Natural killer cell (primary cell): ENCODE measurements at regions of chr7 and their contacts with region 1.

Region 1: DNA sequence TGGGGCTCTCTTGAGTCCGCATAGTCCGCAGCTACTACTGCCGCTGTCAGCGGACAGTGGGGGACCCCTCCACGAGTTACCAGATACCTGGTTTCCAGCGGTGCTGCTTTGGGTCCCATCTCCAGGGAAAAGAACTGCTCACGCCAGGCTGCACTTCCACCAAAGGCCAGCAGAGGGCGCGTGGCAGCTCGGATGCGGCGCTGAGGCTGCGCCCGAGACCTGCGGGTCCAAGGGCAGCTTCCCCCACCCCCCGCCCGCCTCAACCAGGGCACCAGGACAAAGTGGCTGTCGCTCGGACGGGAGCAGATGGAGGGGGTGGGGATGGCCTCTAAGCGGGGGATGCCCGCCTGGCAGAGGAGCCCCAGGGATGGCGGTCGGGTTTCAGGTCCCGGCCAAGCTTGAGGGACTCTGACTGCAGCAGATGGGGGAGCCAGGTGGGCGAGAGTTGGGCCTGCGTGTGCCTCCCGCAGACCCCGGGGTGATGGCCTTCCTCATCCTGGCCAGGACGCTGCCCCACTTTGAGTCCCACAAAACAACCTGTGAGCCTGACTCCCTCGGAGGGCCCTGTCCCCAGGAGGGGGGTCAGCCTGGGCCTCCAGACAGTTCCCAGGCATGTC is 23.8 kb upstream of the ZNF735 start:
- DNase-seq: peak in 1 of 2 donors; percentile 64
- ATAC-seq: no peak
- H3K4me3 ChIP-seq: no peak overlapping the region
- H3K4me3 Mint-ChIP-seq: no peak overlapping the region
- H3K27ac ChIP-seq: no peak overlapping the region
- H3K27ac Mint-ChIP-seq: no peak overlapping the region
- H3K4me1 ChIP-seq: peaks cover 5% of the 10 kb centered on the region
- H3K4me1 Mint-ChIP-seq: no peaks in the 10 kb centered on the region
- H3K27me3 ChIP-seq: no peaks in the 10 kb centered on the region
- H3K27me3 Mint-ChIP-seq: no peaks in the 10 kb centered on the region
- CTCF ChIP-seq: peak; percentile 42

Region 2: GRCh38 chr7:64241162-64241561 is 57.9 kb after region 1 on chr7:
- intact Hi-C with region 1: loop called (anchors 10 kb)
- DNase-seq: no peak
- ATAC-seq: no peak
- H3K4me3 ChIP-seq: no peak overlapping the region
- H3K4me3 Mint-ChIP-seq: no peak overlapping the region
- H3K27ac ChIP-seq: no peak overlapping the region
- H3K27ac Mint-ChIP-seq: no peak overlapping the region
- H3K4me1 ChIP-seq: no peaks in the 10 kb centered on the region
- H3K4me1 Mint-ChIP-seq: no peaks in the 10 kb centered on the region
- H3K27me3 ChIP-seq: no peaks in the 10 kb centered on the region
- H3K27me3 Mint-ChIP-seq: no peaks in the 10 kb centered on the region
- CTCF ChIP-seq: no peak

Region 3: GRCh38 chr7:64614411-64615208 is 431.4 kb after region 1 on chr7:
- intact Hi-C with region 1: no loop called
- DNase-seq: no peak
- ATAC-seq: no peak
- H3K4me3 ChIP-seq: no peak overlapping the region
- H3K4me3 Mint-ChIP-seq: no peak overlapping the region
- H3K27ac ChIP-seq: no peak overlapping the region
- H3K27ac Mint-ChIP-seq: no peak overlapping the region
- H3K4me1 ChIP-seq: no peaks in the 10 kb centered on the region
- H3K4me1 Mint-ChIP-seq: no peaks in the 10 kb centered on the region
- H3K27me3 ChIP-seq: no peaks in the 10 kb centered on the region
- H3K27me3 Mint-ChIP-seq: no peaks in the 10 kb centered on the region
- CTCF ChIP-seq: no peak

Region 4: GRCh38 chr7:64625114-64626082 is 442.2 kb after region 1 on chr7:
- intact Hi-C with region 1: loop called (anchors 5 kb)
- DNase-seq: peak in 1 of 2 donors; percentile 61
- ATAC-seq: peak in 2 of 3 donors; percentile 29 to 31
- H3K4me3 ChIP-seq: no peak overlapping the region
- H3K4me3 Mint-ChIP-seq: no peak overlapping the region
- H3K27ac ChIP-seq: no peak overlapping the region
- H3K27ac Mint-ChIP-seq: no peak overlapping the region
- H3K4me1 ChIP-seq: no peaks in the 10 kb centered on the region
- H3K4me1 Mint-ChIP-seq: no peaks in the 10 kb centered on the region
- H3K27me3 ChIP-seq: no peaks in the 10 kb centered on the region
- H3K27me3 Mint-ChIP-seq: no peaks in the 10 kb centered on the region
- CTCF ChIP-seq: peak; percentile 94